BJ (cell line): ENCODE measurements at regions of chr10 and their contacts with region 1.

Region 1: DNA sequence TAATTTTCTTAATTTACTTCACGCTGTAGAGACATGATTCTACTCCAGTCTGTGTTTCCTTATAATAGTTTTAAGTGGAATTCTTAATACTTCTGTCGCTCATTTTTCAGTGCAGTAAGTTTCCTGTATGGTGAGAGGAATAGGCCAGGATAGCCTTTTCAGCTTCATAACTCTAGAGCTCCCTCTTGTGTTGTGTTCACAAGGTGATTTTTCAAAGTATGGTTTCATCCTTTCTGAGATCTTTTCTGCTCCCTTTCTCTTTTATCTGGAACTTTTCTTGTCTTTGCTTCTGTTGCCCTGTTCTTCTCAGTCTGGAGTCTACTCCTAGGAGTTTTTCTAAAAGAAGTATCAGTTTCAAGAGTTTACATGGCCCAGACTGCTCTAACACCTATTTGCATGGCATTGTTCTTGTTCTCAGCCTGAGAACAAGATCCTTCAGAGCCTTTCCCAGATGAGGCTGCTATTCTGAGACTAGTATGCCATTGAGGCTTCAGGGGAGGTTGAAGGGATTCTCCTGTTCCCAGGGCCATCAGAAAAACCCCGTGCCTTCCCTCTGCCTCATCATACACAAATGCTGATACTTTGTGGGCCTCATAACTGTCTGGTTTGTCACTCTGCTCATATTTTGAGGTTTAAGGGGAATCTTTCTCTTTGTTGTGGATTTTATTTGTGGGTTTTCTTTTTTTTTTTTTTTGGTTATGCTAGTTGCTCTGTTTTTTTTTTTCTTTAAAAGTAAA is 21.8 kb downstream of the NET1 start:
- DNase-seq: no peak
- H3K4me3 ChIP-seq: no peak overlapping the region
- H3K27me3 ChIP-seq: no peaks in the 10 kb centered on the region
- CTCF ChIP-seq: peak; percentile 73

Region 2: GRCh38 chr10:5423771-5424170 is 10.4 kb before region 1 on chr10:
- CTCF ChIA-PET with region 1: interaction called, 13 read pairs
- POLR2A ChIA-PET with region 1: no interaction called
- DNase-seq: no peak
- H3K4me3 ChIP-seq: no peak overlapping the region
- H3K27me3 ChIP-seq: no peaks in the 10 kb centered on the region
- CTCF ChIP-seq: no peak

Region 3: DNA sequence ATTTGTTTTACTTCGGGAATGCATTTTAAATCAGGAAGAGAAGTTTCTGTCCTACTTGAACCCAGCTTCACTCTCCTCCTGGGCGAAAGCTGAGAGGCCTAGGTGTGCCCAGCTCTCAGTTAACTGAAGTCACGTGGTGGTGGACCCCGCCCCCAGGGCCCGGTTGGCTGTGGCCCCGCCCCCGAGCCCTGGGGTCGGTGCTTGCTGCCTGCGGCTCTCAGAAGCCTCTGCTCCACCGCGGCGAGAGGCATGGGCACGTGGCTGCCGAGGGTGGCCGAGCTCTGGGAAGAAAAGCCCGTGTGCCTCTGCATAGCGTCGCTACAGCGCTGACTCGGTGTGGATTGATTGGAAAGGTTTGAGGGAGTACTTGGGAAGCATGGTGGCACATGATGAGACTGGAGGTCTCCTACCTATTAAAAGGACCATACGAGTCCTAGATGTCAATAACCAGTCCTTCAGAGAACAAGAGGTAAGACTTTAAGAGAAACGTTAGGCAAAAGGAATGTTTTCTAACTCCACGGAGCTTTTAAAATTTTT is 12.3 kb after region 1 on chr10:
- CTCF ChIA-PET with region 1: interaction called, 23 read pairs
- POLR2A ChIA-PET with region 1: no interaction called
- DNase-seq: peak; percentile 66
- H3K4me3 ChIP-seq: peak overlapping the region; percentile 69
- H3K27me3 ChIP-seq: no peaks in the 10 kb centered on the region
- CTCF ChIP-seq: no peak

Region 4: GRCh38 chr10:5488309-5489167 is 54.4 kb after region 1 on chr10:
- CTCF ChIA-PET with region 1: no interaction called
- POLR2A ChIA-PET with region 1: no interaction called
- DNase-seq: no peak
- H3K4me3 ChIP-seq: no peak overlapping the region
- H3K27me3 ChIP-seq: no peaks in the 10 kb centered on the region; the same call in none of the 2 replicates
- CTCF ChIP-seq: no peak

Region 5: GRCh38 chr10:5764422-5765297 is 330.5 kb after region 1 on chr10:
- CTCF ChIA-PET with region 1: no interaction called
- POLR2A ChIA-PET with region 1: no interaction called
- DNase-seq: no peak
- H3K4me3 ChIP-seq: no peak overlapping the region
- H3K27me3 ChIP-seq: no peaks in the 10 kb centered on the region
- CTCF ChIP-seq: no peak